Activated CD4-positive, alpha-beta T cell treated with anti-CD3 and anti-CD28 coated beads, Interleukin-2, amount 10 ng/mL, durations not matched to agents 7 days and 5 days (primary cell): ENCODE measurements at regions of chr2 and their contacts with region 1.

Region 1: GRCh38 chr2:174577967-174578589 is 19.5 kb downstream of the WIPF1 start:
- DNase-seq: peak; percentile 66
- H3K4me3 Mint-ChIP-seq: no peak overlapping the region
- H3K27ac Mint-ChIP-seq: no peak overlapping the region
- H3K4me1 Mint-ChIP-seq: peaks cover 66% of the 10 kb centered on the region
- H3K27me3 Mint-ChIP-seq: no peaks in the 10 kb centered on the region

Region 2: GRCh38 chr2:174688079-174688478 is 110.0 kb after region 1 on chr2:
- CTCF ChIA-PET with region 1: interaction called, 14 read pairs
- POLR2A ChIA-PET with region 1: no interaction called
- DNase-seq: no peak
- H3K4me3 Mint-ChIP-seq: no peak overlapping the region
- H3K27ac Mint-ChIP-seq: no peak overlapping the region
- H3K4me1 Mint-ChIP-seq: peaks cover 27% of the 10 kb centered on the region
- H3K27me3 Mint-ChIP-seq: no peaks in the 10 kb centered on the region